Right ventricle myocardium superior (tissue), 1 donor: ENCODE measurements at regions of chr18 and their contacts with region 1.

Region 1: GRCh38 chr18:35756506-35757117 is 175.1 kb downstream of the GALNT1 start:
- DNase-seq: no peak
- ATAC-seq: peak; percentile 91

Region 2: GRCh38 chr18:35842536-35842935 is 85.9 kb after region 1 on chr18:
- intact Hi-C with region 1: no loop called
- DNase-seq: no peak
- ATAC-seq: no peak

Region 3: GRCh38 chr18:35949903-35950627 is 193.5 kb after region 1 on chr18:
- intact Hi-C with region 1: loop called (anchors 2 kb)
- DNase-seq: peak; percentile 69
- ATAC-seq: peak; percentile 95